ENCODE measurements at regions of chr5 and their contacts with region 1.

Region 1: GRCh38 chr5:141691867-141692532 is 10.0 kb upstream of the ARAP3 start:
- DNase-seq: peak; percentile 76 to 96
- H3K4me3 ChIP-seq: no peak overlapping the region
- CTCF ChIP-seq: peak in 2 of 3 donors; percentile 11 to 90
- POLR2A ChIP-seq: no peak

Region 2: DNA sequence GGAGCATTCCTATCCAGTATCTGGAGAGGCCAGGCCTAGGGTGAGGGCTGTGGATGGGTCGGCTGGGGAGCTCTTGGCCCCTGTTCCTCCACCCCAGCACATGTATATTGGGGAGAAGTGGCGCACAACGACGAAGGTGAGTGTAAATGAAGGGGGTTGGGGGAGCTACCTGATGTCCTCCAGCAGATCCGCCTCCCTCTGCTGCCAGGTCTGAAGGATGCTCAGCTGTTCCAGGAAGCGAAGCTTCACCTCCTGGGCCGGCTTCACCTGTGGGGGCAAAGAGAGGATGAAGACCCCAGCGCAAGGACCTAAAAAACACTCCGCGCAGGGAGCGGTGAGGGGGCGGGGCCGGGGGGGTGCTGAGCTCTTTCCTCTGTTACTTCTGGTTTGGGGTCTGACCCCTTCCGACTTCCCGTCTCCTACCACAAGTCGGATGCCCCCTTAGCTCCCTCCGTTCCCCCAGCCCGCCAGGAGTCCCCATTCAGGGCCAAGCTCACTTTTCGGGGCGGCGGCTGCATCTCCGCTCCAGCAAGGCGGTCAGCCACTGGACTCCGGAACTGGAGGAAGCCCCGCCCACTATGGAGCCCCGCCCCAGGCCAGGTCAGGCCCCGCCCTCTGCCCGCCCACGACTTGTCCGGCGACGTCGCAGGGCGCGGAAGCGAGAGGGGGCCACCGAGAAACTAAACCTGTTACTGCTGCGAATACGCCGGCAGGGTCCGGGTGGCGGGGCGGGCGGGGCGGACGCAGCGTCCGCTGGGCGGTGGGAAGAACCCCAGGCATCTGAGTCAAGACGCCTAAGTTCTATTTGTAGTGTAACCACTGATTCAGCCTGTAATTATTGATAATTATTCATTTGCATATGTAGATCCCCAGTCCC is 40.9 kb before region 1 on chr5 and contains the start of gene FCHSD1:
- intact Hi-C with region 1: no loop called
- DNase-seq: peak; percentile 82 to 98
- H3K4me3 ChIP-seq: peak within 1 kb of the TSS; percentile 40
- CTCF ChIP-seq: no peak
- POLR2A ChIP-seq: no peak
- total RNA-seq, gene FCHSD1: 72.1 to 136 (median 101) TPM

Region 3: GRCh38 chr5:141846031-141846430 is 154.0 kb after region 1 on chr5:
- intact Hi-C with region 1: no loop called
- DNase-seq: no peak
- H3K4me3 ChIP-seq: no peak overlapping the region
- CTCF ChIP-seq: no peak
- POLR2A ChIP-seq: no peak

Region 4: GRCh38 chr5:141958113-141958512 is 266.1 kb after region 1 on chr5 and contains the start of gene PCDH12:
- intact Hi-C with region 1: loop called (anchors 5 kb)
- DNase-seq: peak in 1 of 2 donors; percentile 89
- H3K4me3 ChIP-seq: no peak within 1 kb of the TSS
- CTCF ChIP-seq: no peak
- POLR2A ChIP-seq: no peak
- total RNA-seq, gene PCDH12: 0.34 to 1.5 (median 0.54) TPM

Region 5: DNA sequence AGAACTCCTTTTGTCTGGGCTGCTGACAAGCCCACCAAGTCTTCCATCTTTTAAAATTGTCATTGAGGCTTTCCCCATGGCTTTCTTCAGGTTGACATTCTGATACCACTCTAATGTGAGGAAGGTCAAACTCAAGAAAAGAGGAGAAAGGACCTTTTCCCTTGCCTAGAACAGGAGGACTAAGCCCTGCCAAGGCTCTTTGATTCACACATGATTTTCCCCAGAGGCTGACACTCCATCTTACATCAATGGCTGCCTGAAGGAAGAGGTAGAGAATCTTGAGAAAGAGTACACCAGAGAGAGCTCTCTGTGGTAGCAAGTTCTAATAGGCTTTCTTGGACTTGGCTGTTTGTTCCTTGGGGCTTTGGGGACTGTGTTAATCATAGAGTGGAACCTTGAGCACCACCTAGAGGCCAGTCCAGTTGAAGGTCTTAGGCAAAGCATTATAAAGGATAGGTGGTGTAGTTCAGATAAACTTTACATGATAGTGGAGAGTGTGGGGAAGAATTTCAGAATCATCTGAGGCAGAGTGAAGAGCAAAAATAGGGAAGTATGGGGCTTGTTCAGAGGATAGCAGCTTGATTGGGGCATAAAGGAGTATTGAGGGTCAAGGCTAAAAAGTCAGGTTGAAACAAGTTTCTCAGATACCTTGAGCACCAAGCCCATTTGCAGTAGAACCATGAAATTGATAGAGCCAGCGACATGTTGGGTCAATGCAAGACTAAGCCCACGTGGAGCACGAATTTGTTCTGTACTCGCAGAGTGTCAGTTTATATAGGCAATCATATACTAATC is 453.3 kb after region 1 on chr5:
- intact Hi-C with region 1: loop called (anchors 10 kb)
- DNase-seq: peak in 1 of 2 donors; percentile 62
- H3K4me3 ChIP-seq: no peak overlapping the region
- CTCF ChIP-seq: peak in 1 of 3 donors; percentile 40
- POLR2A ChIP-seq: no peak